Aorta (tissue), 5 donors: ENCODE measurements at regions of chr3 and their contacts with region 1.

Region 1: DNA sequence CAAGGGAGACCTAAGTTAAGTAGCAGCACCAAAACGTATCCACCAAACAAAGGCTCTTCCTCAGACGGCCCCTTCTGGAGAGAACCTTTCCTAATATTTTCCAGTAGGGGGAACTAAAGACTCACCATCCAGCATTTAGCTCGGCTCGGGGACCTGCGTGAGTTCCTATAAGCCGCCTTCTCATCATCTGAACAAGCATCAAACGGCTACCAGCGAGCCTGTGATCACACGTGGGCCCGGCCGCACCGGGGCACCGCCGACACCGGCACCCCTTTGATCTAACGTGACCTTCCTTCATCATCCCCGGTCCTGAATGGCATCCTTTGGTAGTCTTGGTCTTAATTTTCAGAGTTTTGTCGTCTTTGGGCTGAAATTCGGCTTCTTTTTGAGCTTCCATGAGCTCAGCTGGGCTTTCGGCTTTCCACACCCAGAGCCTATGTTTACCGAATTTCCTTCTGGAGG is 1.4 kb upstream of the ROBO2 start:
- DNase-seq: peak in 1 of 2 donors; percentile 71
- ATAC-seq: peak; percentile 90
- H3K4me3 ChIP-seq: peak overlapping the region; percentile 12 to 94
- H3K27ac ChIP-seq: no peak overlapping the region
- H3K4me1 ChIP-seq: peaks cover 0 to 3% of the 10 kb centered on the region in 2 donors
- H3K27me3 ChIP-seq: no peaks in the 10 kb centered on the region

Region 2: DNA sequence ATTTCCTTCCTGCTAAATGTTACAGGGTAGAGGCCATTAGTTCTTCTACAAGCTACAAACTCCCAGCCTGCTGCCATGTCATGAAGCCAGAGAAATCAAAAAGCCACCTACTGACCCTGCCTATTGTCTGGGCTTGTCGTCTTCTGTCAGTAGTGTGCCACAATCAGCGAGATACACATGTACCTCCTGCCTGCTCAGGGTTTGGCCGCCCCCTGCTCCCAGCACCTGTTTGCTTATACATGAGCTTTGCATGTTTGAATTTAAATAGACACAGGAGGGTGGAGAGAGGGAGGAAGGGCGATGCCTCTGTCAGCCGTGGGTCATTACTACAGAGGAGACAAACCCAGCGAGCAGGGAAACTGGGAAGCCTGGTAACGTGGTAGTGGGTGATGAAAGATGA is 107.5 kb after region 1 on chr3:
- intact Hi-C with region 1: no loop called
- DNase-seq: no peak
- ATAC-seq: no peak
- H3K4me3 ChIP-seq: no peak overlapping the region
- H3K27ac ChIP-seq: no peak overlapping the region
- H3K4me1 ChIP-seq: no peaks in the 10 kb centered on the region
- H3K27me3 ChIP-seq: no peaks in the 10 kb centered on the region

Region 3: DNA sequence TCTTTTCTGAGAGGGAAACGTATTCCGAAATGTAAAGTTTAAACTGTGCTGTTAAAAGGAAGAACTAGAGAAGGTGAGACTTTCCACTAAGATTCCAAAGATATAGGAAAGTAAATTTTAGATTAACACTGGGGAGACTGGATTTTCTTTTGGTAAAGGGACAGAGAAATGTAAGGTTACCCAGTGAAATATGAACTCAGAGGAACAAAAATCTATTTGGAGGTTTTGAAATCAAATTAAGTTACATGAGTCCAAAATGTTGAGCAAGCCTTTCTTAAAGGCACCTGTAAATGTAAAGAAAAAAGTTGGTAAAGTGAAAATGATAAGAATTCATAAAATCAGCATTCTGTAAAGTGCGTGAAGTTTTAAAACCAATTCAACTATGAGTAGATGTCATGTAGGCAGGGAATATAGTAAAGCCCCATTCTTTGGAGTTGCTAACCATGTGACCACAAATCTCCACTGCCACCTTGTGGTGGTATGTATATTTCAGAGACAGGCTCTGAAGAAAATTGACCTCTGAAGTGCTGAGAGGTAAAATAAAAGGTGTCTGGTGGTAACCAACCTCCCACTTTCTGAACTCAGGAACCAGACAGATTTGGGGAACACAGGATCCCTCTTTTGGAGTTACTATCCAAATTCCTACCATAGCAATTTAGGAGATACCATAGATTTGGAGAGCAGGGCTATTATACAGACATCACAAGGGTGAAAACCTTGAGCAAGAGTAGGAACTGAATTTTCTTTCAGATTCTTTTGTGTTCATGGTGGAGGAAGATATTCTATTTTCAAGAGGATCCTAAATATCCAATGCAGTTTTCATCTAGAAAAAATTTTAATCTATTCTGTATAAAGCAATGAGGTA is 216.7 kb after region 1 on chr3:
- intact Hi-C with region 1: loop called (anchors 5 kb)
- DNase-seq: no peak
- ATAC-seq: peak; percentile 79
- H3K4me3 ChIP-seq: no peak overlapping the region
- H3K27ac ChIP-seq: no peak overlapping the region
- H3K4me1 ChIP-seq: no peaks in the 10 kb centered on the region
- H3K27me3 ChIP-seq: no peaks in the 10 kb centered on the region

Region 4: GRCh38 chr3:78645628-78646310 is 1607.3 kb after region 1 on chr3:
- intact Hi-C with region 1: loop called (anchors 5 to 10 kb)
- DNase-seq: no peak
- ATAC-seq: peak; percentile 79
- H3K4me3 ChIP-seq: no peak overlapping the region
- H3K27ac ChIP-seq: no peak overlapping the region
- H3K4me1 ChIP-seq: no peaks in the 10 kb centered on the region
- H3K27me3 ChIP-seq: no peaks in the 10 kb centered on the region